HepG2 (cell line): ENCODE measurements at regions of chr6 and their contacts with region 1.

Region 1: GRCh38 chr6:108535114-108535742 is 25.5 kb upstream of the FOXO3 start:
- DNase-seq: no peak
- ATAC-seq: peak; percentile 83
- H3K4me3 ChIP-seq: peak overlapping the region; percentile 1 to 33 (median 24); a peak in 4 of 6 replicates
- H3K27ac ChIP-seq: peak overlapping the region; percentile 8
- H3K4me1 ChIP-seq: peaks cover 40% of the 10 kb centered on the region
- H3K27me3 ChIP-seq: no peaks in the 10 kb centered on the region; a peak in 1 of 5 replicates
- CTCF ChIP-seq: 0 out of 2 replicates have a peak, but pooled peaks have one; percentile 10
- EP300 ChIP-seq: 0 out of 4 replicates have a peak, but pooled peaks of 1 of the 2 experiments have one; percentile 3
- POLR2A ChIP-seq: no peak
- RAD21 ChIP-seq: no peak

Region 2: GRCh38 chr6:108888745-108889144 is 353.5 kb after region 1 on chr6:
- CTCF ChIA-PET with region 1: no interaction called
- POLR2A ChIA-PET with region 1: no interaction called
- in situ Hi-C with region 1: loop called (anchors 5 kb)
- intact Hi-C with region 1: no loop called
- DNase-seq: no peak
- ATAC-seq: no peak
- H3K4me3 ChIP-seq: no peak overlapping the region
- H3K27ac ChIP-seq: no peak overlapping the region
- H3K4me1 ChIP-seq: no peaks in the 10 kb centered on the region
- H3K27me3 ChIP-seq: no peaks in the 10 kb centered on the region
- CTCF ChIP-seq: no peak
- EP300 ChIP-seq: no peak
- POLR2A ChIP-seq: no peak
- RAD21 ChIP-seq: no peak